Cardiac septum (tissue), 1 donor: ENCODE measurements at regions of chr17 and their contacts with region 1.

Region 1: GRCh38 chr17:82751571-82752370 is at the start of gene TBCD:
- DNase-seq: peak; percentile 92
- total RNA-seq, gene TBCD: 67.3 TPM

Region 2: GRCh38 chr17:82716203-82717010 is 35.4 kb before region 1 on chr17 and contains the start of gene FN3KRP:
- intact Hi-C with region 1: loop called (anchors 5 kb)
- DNase-seq: peak; percentile 97
- total RNA-seq, gene FN3KRP: 16.2 TPM